ENCODE measurements at regions of chr3 and their contacts with region 1.

Region 1: GRCh38 chr3:129576514-129577352 is 29.7 kb downstream of the PLXND1 start:
- H3K4me3 Mint-ChIP-seq: peak overlapping the region; percentile 9
- H3K27ac Mint-ChIP-seq: peak overlapping the region; percentile 85
- H3K4me1 Mint-ChIP-seq: peaks cover 51% of the 10 kb centered on the region
- H3K27me3 Mint-ChIP-seq: no peaks in the 10 kb centered on the region

Region 2: DNA sequence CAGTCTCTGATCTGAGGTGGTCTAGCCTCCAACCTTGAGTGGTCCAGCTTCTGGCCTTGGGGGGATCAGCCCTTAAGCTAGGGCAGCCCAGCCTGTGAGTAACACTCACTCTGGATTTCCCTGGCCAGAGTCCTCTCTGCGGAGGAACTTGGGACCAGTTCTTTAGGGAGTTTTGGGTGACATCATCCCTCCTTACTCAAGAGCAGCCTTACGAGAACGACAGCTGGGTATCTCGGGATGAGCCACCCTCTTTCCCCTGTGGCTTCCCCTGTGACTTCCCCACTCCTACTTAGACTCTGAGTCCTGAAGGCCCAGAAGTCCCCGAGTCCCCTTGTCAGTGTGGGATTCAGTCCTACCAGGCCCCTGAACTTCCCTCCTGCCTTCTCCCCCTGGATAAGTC is 40.0 kb after region 1 on chr3:
- intact Hi-C with region 1: loop called (anchors 5 kb)
- H3K4me3 Mint-ChIP-seq: no peak overlapping the region
- H3K27ac Mint-ChIP-seq: peak overlapping the region; percentile 90
- H3K4me1 Mint-ChIP-seq: peaks cover 91% of the 10 kb centered on the region
- H3K27me3 Mint-ChIP-seq: peaks cover under 1% of the 10 kb centered on the region

Measured in dendritic cell treated with granulocyte-macrophage colony-stimulating factor and Interleukin-4, amounts not matched to agents 40 ng/mL and 50 ng/mL, for 4 days (primary cell).